Mammary epithelial cell (primary cell): ENCODE measurements at regions of chr1 and their contacts with region 1.

Region 1: DNA sequence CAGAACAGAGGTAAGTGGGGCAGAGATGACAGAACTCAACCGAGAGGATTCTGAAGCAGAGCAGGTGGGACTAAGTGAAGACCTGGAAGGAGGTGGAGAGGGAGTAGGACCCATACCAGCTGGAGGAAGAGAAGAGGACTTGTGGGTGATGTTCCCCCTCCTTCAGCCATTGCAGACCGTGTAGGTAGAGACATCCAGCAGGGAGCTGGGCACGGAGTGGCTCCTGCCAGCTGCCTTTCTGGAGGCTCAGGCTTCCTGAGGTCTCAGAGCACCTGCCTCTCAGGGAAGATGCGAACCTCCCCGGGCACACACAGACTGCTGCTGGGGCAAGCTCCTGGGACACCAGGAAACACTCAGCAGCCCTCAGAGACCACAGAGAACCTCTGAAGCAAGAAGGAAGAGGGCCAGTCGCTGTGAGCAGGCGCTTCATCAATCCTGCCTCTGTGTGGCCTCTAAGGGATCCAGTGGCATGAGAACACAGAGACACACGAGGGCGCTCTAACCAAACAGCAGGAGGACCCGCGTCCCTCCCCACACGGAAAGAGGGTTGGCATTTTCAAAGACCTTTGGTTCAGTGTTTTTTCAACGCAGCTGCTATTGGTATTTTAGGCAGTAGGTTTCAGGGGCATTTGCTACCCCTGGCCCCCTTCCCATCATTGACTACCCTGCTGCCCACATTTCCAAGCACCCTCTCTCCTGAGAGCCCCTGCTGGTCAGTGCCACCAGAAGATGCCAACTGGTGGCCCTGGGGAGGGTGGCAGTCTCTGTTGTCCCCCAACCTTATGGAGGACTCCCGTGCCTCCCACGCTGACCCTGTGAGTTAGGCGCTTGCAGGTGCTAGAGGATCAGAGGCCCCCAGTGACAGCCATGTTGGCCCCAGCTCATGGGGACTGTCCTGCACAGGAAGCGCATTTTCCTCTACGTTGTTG is 89.6 kb upstream of the EDN2 start:
- DNase-seq: peak; percentile 57
- H3K4me3 ChIP-seq: no peak overlapping the region
- H3K27ac ChIP-seq: no peak overlapping the region
- H3K4me1 ChIP-seq: no peaks in the 10 kb centered on the region
- H3K27me3 ChIP-seq: no peaks in the 10 kb centered on the region
- CTCF ChIP-seq: peak; percentile 91 to 98

Region 2: GRCh38 chr1:41268154-41268770 is 305.8 kb before region 1 on chr1:
- CTCF ChIA-PET with region 1: no interaction called
- dilution Hi-C with region 1: no loop called
- in situ Hi-C with region 1: no loop called
- intact Hi-C with region 1: loop called (anchors 5 kb)
- DNase-seq: peak; percentile 50
- H3K4me3 ChIP-seq: no peak overlapping the region
- H3K27ac ChIP-seq: no peak overlapping the region
- H3K4me1 ChIP-seq: no peaks in the 10 kb centered on the region
- H3K27me3 ChIP-seq: no peaks in the 10 kb centered on the region
- CTCF ChIP-seq: peak; percentile 94 to 98

Region 3: DNA sequence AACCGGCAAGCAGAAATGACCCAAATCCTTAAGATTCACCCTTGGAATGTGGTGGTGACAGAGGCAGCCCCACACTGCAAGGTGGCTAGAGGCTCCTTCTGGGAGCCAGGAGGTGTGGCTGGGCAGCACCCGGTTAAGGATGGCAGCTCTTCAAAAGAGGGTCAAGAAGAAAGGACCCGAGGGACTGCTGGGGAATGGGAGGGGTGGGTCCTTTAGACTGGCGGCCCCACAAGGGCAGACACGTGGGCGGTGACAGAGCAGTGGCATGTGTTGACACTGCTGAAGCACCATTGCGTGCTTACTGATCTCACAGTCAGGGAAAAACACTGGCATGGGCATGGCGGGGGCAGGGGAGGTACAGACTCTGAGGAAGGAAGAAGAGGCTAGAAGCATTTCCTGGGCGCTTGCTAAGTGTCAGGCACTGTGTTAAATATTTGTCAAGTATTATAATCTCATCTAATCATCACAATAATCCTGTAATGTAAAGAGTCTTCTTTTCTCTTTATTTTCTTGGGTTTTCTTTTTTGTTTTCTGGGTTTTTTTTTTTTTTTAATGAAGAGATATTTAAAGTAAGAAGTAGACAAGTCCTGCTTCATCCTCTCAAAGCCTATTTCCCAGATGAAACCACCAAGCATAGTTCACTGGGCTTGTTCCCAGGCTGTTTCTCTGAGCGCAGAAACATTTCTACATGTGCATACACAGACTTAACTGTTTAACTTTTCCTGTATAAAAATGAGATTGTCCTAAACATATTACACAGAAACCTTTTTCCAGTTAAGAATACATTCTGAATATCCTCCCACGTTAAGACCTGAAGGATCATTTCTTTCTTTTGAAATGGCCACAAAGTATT is 76.2 kb after region 1 on chr1:
- CTCF ChIA-PET with region 1: no interaction called
- dilution Hi-C with region 1: no loop called
- in situ Hi-C with region 1: no loop called
- intact Hi-C with region 1: loop called (anchors 10 kb)
- DNase-seq: no peak
- H3K4me3 ChIP-seq: no peak overlapping the region
- H3K27ac ChIP-seq: no peak overlapping the region
- H3K4me1 ChIP-seq: peaks cover 10% of the 10 kb centered on the region
- H3K27me3 ChIP-seq: no peaks in the 10 kb centered on the region
- CTCF ChIP-seq: no peak

Region 4: GRCh38 chr1:41795205-41795762 is 221.2 kb after region 1 on chr1:
- CTCF ChIA-PET with region 1: no interaction called
- dilution Hi-C with region 1: no loop called
- in situ Hi-C with region 1: loop called (anchors 5 kb)
- intact Hi-C with region 1: loop called (anchors 1 kb)
- DNase-seq: peak; percentile 43
- H3K4me3 ChIP-seq: no peak overlapping the region
- H3K27ac ChIP-seq: no peak overlapping the region
- H3K4me1 ChIP-seq: peaks cover 11% of the 10 kb centered on the region
- H3K27me3 ChIP-seq: no peaks in the 10 kb centered on the region
- CTCF ChIP-seq: peak; percentile 39 to 70

Region 5: DNA sequence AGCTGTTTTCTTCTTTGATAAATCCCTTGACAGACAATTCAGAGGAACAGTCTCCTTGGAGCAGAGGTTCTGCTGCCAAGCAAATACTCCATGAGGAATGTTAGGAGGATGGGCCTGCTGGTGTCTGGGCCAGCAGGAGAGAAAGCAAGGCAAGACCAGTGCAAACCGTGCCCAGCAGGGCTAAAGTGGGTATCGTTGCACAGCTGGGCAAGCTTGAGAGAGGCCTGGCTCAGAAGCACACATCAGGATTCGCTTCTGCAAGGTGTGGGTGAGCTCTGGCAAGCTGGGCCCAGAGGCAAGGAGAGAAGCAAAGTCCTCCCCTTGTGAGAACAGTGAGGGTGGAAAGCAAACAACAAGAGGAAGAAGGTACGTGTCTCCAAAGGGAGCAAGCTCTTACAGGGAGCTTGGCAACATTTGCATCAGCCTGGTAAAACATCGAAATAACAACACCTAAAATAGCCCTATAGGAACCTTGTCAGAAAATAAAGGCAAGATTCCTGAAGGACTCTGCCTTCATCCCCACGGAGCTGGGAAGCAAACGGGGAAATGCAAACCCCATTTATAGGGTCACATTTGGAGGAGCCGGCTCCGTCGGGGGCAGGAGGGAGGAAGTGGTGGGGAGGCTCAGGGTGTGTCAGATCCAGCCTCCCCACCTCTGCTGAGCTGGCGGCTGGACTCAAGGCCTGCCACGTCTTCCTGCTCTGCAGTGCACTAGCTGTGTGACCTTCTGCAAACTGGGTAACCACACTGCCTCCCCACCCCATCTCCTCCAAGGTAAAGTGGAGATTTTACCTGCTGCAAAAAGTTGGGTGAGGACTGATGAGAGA is 407.0 kb after region 1 on chr1:
- CTCF ChIA-PET with region 1: no interaction called
- dilution Hi-C with region 1: no loop called
- in situ Hi-C with region 1: no loop called
- intact Hi-C with region 1: loop called (anchors 10 kb)
- DNase-seq: no peak
- H3K4me3 ChIP-seq: no peak overlapping the region
- H3K27ac ChIP-seq: no peak overlapping the region
- H3K4me1 ChIP-seq: no peaks in the 10 kb centered on the region
- H3K27me3 ChIP-seq: no peaks in the 10 kb centered on the region
- CTCF ChIP-seq: no peak

Region 6: GRCh38 chr1:42146626-42147320 is 572.7 kb after region 1 on chr1:
- CTCF ChIA-PET with region 1: no interaction called
- dilution Hi-C with region 1: no loop called
- in situ Hi-C with region 1: loop called in 1 of 2 experiments (anchors 10 kb)
- intact Hi-C with region 1: loop called (anchors 2 kb)
- DNase-seq: peak; percentile 79
- H3K4me3 ChIP-seq: peak overlapping the region in 1 of 3 experiments; percentile 11
- H3K27ac ChIP-seq: no peak overlapping the region
- H3K4me1 ChIP-seq: peaks cover 20% of the 10 kb centered on the region
- H3K27me3 ChIP-seq: no peaks in the 10 kb centered on the region
- CTCF ChIP-seq: peak; percentile 91 to 98

Region 7: GRCh38 chr1:42618866-42619265 is 1044.8 kb after region 1 on chr1:
- CTCF ChIA-PET with region 1: no interaction called
- dilution Hi-C with region 1: no loop called
- in situ Hi-C with region 1: loop called in 1 of 2 experiments (anchors 25 kb)
- intact Hi-C with region 1: no loop called
- DNase-seq: peak; percentile 2
- H3K4me3 ChIP-seq: no peak overlapping the region
- H3K27ac ChIP-seq: no peak overlapping the region
- H3K4me1 ChIP-seq: no peaks in the 10 kb centered on the region
- H3K27me3 ChIP-seq: no peaks in the 10 kb centered on the region
- CTCF ChIP-seq: no peak